ENCODE measurements at regions of chr12 and their contacts with region 1.

Region 1: DNA sequence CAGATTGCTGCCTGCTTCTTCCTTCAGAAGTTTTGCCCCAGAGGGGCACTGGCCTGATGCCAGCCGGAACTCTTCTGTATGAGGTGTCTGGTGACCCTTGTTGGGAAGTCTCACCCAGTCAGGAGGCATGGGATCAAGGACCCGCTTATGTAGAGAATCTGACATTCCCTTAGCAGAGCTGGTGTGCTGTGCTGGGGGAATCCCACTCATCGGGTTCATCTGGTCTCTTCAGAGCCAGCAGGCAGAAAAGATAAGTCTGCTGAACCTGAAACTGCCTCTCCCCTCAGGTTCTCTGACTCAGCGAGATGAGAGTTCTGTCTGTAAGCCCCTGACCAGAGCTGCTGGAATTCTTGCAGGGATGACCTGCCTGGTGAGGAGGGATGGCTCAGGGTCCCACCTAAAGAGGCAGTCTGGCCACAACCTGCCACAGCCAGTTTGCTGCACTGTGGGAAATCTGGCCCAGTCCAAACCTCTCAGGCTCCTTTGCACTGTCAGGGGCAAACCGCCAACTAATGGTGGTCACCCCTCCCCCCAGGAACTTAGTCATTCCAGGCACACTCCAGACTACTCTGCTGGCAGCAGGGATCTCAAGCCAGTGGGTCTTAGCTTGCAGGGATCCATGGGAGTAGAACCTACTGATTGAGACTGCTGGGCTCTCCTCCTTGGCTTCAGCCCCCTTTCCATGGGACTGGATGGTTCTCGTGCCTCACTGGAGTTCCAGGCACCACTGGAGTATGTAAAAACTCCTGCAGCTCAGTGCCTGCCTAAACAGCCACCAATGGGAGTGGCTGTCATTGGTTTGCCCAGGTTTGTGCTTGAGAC is 4.1 kb downstream of the CLEC2D start:
- DNase-seq: peak; percentile 43
- H3K4me3 ChIP-seq: peak overlapping the region; percentile 68
- H3K27ac ChIP-seq: peak overlapping the region; percentile 87
- H3K4me1 ChIP-seq: peaks cover 93% of the 10 kb centered on the region
- CTCF ChIP-seq: no peak

Region 2: GRCh38 chr12:9391815-9392214 is 281.8 kb before region 1 on chr12:
- CTCF ChIA-PET with region 1: no interaction called
- POLR2A ChIA-PET with region 1: no interaction called
- intact Hi-C with region 1: no loop called
- DNase-seq: no peak
- H3K4me3 ChIP-seq: no peak overlapping the region
- H3K27ac ChIP-seq: no peak overlapping the region
- H3K4me1 ChIP-seq: peaks cover 6% of the 10 kb centered on the region
- CTCF ChIP-seq: no peak

Region 3: DNA sequence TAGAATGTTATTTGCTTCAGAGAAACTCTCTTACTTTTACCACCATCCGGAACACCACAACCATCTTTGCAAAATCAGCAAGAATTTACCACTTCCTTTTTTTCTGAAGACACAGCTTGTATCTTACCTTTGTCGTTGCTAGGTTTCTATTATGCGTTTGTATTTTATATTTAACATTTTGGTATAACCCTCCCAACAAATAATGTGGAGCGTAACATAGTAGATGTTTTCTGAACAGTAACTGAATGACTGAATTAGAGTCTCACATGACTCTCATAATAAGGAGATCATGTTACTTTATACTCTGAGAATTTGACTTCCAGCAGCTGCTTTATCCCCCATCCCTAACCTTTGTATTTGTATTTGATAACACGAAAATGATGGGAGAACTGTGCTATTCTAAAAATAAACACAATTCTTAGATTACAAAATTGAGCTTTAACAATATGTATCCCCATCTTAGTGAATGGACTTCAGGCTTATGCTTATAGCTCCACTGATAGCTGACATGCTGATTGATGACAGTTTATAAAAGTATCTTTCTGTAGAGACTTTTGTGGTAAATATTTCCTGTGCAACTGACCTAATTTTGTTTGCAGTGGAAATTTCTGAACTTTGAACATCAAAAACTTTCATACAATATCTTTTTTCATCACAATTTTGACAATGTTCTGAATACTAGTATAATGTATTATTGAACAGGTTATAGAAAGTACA is 58.0 kb before region 1 on chr12:
- CTCF ChIA-PET with region 1: no interaction called
- POLR2A ChIA-PET with region 1: interaction called, 11 read pairs
- intact Hi-C with region 1: no loop called
- DNase-seq: peak; percentile 67
- H3K4me3 ChIP-seq: peak overlapping the region; percentile 58
- H3K27ac ChIP-seq: peak overlapping the region; percentile 96
- H3K4me1 ChIP-seq: peaks cover 61% of the 10 kb centered on the region
- CTCF ChIP-seq: no peak

Region 4: GRCh38 chr12:9634177-9634803 is 39.3 kb before region 1 on chr12:
- CTCF ChIA-PET with region 1: no interaction called
- POLR2A ChIA-PET with region 1: interaction called, 3 read pairs
- intact Hi-C with region 1: loop called (anchors 1 kb)
- DNase-seq: peak; percentile 83
- H3K4me3 ChIP-seq: no peak overlapping the region
- H3K27ac ChIP-seq: peak overlapping the region; percentile 22
- H3K4me1 ChIP-seq: peaks cover 32% of the 10 kb centered on the region
- CTCF ChIP-seq: peak; percentile 100

Region 5: DNA sequence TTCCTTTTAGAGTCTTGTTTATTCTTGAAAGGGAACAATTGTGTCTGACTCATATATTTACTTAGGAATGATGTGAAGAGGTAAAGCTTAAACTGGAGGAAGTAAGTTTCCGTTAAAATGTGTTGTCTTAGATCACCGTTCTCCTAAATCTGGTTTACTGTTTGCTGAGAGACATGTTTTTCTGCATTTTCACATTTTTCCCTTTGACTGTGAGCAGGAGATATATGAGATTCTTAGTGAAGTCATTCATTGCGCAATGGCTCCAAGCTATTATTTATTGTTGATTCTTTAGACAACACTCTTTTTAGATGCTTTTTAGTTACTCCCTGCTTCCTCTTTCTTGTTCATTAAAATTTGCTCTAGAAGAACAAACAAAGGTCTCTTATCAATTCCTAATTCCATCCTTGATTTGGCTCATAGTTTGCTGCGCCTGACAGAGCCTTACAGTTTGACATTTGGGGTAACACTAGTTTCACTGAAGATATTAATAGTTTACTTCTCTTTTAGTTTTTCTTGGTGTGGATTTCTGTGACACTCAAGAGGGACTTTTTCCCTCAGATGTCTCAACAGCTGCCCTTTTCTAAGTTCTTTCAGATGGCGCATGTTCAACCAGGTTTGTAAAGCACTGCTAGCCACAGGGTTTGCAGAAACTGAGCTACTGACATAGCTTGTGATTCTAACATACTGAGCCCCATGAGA is 47.9 kb after region 1 on chr12:
- CTCF ChIA-PET with region 1: interaction called, 3 read pairs
- POLR2A ChIA-PET with region 1: interaction called, 136 read pairs
- intact Hi-C with region 1: no loop called
- DNase-seq: peak; percentile 92
- H3K4me3 ChIP-seq: peak overlapping the region; percentile 42
- H3K27ac ChIP-seq: peak overlapping the region; percentile 99
- H3K4me1 ChIP-seq: peaks cover 100% of the 10 kb centered on the region
- CTCF ChIP-seq: no peak

Region 6: GRCh38 chr12:9731797-9732196 is 58.2 kb after region 1 on chr12:
- CTCF ChIA-PET with region 1: no interaction called
- POLR2A ChIA-PET with region 1: interaction called, 136 read pairs
- intact Hi-C with region 1: loop called (anchors 1 kb)
- DNase-seq: peak; percentile 77
- H3K4me3 ChIP-seq: peak overlapping the region; percentile 78
- H3K27ac ChIP-seq: peak overlapping the region; percentile 99
- H3K4me1 ChIP-seq: peaks cover 77% of the 10 kb centered on the region
- CTCF ChIP-seq: no peak

Measured in OCI-LY7 (cell line).